ENCODE measurements at regions of chr20 and their contacts with region 1.

Region 1: GRCh38 chr20:2005831-2006426 is 12.1 kb upstream of the PDYN start:
- DNase-seq: peak; percentile 39 to 62 (median 58)
- ATAC-seq: peak; percentile 56; the same call in 1 of the 3 replicates
- H3K4me3 ChIP-seq: no peak overlapping the region
- H3K27ac ChIP-seq: no peak overlapping the region
- H3K4me1 ChIP-seq: no peaks in the 10 kb centered on the region
- H3K27me3 ChIP-seq: no peaks in the 10 kb centered on the region
- CTCF ChIP-seq: no peak
- EP300 ChIP-seq: no peak
- POLR2A ChIP-seq: no peak
- RAD21 ChIP-seq: no peak

Region 2: GRCh38 chr20:2093159-2093781 is 87.3 kb after region 1 on chr20:
- CTCF ChIA-PET with region 1: no interaction called
- POLR2A ChIA-PET with region 1: no interaction called
- in situ Hi-C with region 1: no loop called
- intact Hi-C with region 1: loop called (anchors 5 kb)
- DNase-seq: peak in 2 of 4 experiments; percentile 12 to 22
- ATAC-seq: no peak
- H3K4me3 ChIP-seq: no peak overlapping the region
- H3K27ac ChIP-seq: no peak overlapping the region
- H3K4me1 ChIP-seq: no peaks in the 10 kb centered on the region
- H3K27me3 ChIP-seq: peaks cover 2 to 4% of the 10 kb centered on the region in 2 experiments; a peak in 1 of 5 replicates
- CTCF ChIP-seq: peak; percentile 34 to 56 (median 51)
- EP300 ChIP-seq: no peak
- POLR2A ChIP-seq: no peak
- RAD21 ChIP-seq: no peak; a peak in 1 of 4 replicates

Region 3: DNA sequence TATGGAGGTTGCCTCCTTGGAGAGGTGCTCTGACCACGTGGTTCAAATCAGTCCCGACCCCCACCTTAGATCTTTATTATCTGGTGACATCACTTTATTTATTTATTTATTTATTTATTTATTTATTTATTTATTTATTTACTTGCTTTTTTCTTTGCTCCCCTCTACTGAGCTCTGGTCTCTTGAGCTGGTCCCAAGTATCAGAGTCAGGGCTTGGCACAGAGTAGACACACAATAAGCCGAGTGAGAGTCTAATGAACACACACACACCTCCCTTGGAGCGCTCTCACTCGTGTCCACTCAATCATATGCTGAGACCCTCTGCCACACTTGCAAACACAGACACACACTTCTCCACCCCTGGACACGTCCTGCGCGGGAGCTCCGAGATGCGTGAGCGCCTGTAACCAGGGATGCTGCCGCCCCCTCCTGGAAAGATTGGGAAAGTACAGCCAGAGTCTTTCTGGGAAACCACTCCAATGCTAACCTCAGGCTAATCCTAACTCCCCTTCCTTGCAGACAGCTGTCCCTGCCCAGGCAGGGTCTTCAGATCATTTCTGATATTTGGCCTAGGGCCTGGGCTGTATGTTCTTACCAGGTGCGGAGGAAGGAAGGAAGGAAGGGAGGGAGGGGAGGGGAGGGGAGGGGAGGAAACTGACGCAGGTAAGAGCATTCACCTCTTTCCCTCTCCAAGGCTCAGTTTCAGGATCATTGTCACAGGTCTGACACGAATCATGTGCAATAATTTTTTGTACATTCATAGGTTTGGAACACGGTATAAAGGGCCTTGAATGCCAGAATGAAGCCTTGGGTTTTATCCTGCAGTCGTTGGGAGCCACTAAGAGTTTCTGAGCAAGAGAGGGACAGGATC is 166.6 kb after region 1 on chr20:
- CTCF ChIA-PET with region 1: interaction called, 14 read pairs
- POLR2A ChIA-PET with region 1: interaction called, 4 read pairs
- in situ Hi-C with region 1: no loop called
- intact Hi-C with region 1: loop called (anchors 1 kb)
- DNase-seq: peak; percentile 61 to 72 (median 66)
- ATAC-seq: peak; percentile 83
- H3K4me3 ChIP-seq: no peak overlapping the region
- H3K27ac ChIP-seq: no peak overlapping the region
- H3K4me1 ChIP-seq: no peaks in the 10 kb centered on the region
- H3K27me3 ChIP-seq: peaks cover 0 to 12% of the 10 kb centered on the region in 2 experiments; a peak in 3 of 5 replicates
- CTCF ChIP-seq: peak; percentile 79 to 83 (median 81)
- EP300 ChIP-seq: no peak
- POLR2A ChIP-seq: no peak
- RAD21 ChIP-seq: peak; percentile 69 to 89